Right ventricle myocardium inferior (tissue), 1 donor: ENCODE measurements at regions of chr10 and their contacts with region 1.

Region 1: DNA sequence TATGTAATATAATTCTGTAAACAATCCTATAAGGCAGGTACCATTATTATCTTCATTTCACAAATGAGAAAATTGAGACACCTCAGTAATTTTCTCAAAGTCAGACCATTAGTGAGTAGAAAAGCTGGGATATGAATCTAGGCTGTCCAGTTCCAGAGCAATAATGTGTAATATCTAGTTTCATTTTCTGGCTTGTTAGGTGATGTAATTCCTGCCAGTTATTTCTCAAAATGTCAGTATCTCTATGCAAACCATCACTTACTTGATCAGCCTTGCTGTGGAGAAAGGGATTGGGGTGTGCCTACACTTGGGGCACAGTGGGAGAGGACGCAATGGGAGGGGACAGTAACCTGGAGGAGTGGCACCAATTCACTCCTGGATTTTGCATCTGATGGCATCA is 157.5 kb downstream of the LYZL1 start:
- DNase-seq: no peak
- ATAC-seq: no peak

Region 2: GRCh38 chr10:29304264-29305030 is 141.9 kb before region 1 on chr10:
- intact Hi-C with region 1: no loop called
- DNase-seq: no peak
- ATAC-seq: peak; percentile 77

Region 3: GRCh38 chr10:29370097-29371092 is 75.9 kb before region 1 on chr10:
- intact Hi-C with region 1: no loop called
- DNase-seq: no peak
- ATAC-seq: no peak

Region 4: DNA sequence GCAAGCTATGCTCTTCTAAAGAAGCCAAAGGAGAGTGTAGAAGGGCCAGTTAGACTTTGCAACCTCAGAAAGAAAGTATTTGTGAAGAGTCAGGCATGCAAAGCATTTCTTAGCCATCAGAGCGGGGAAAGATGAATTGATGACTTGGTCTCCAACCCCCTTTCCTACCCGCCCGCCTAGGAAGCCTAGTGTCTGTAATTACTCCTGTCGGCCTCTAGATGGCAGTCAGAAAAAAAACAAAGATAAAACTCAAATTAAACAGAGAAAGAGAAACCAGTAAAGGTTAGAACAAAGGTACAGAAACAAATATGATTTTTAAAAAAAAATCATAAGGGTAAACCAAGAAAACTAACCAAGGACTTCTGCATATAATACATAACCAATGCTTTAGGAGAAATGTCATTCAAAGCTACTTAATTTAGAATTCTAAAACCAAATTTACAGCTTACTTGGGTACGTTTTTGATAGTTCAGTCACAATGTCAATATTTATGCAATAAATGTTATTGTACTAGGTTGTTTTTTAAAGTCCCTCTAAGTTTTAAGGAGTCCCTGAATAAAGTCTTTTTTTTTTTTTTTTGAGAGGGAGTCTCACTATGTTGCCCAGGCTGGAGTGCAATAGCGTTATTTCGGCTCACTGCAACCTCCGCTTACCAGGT is 59.9 kb before region 1 on chr10:
- intact Hi-C with region 1: loop called (anchors 5 kb)
- DNase-seq: no peak
- ATAC-seq: no peak

Region 5: DNA sequence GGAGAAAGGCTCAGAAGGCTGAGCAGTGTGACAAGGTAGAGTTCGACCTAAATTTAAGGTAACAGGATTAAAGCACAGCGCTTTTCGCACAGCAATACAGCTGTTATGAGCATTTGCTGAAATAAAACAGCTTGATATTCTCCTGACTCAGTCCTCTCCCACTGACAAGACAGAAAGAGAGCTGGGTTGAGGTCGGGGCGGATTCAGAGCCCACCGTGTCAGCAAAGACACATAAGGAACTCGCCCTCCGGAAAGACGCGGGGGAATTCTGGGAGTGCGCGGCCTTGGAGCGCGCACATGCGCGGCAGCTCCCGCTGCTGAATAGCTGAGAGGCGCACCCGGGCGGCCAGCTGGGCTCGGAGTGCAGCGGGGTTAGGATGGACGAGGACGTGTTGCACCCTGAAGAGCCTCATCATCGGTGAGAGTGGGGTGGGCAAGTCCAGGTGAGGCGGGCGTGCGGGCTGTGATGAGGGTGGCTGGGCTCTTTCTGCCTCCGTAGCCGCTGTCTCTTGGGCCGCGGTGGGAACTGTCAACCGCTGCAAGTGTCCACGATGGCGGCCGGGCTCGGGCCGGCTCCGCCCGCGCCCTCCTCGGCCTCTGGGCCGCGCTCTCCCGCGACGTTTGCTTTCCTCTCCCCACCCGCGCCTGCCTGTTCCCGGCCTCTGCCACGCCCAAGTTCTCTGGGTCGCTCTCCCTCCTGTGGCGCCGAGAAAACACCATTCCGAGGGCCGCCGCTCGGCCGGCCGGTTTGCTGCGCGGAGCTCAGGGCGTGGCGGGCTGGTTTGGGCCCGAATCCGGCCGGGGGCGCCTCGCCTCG is 36.9 kb before region 1 on chr10:
- intact Hi-C with region 1: loop called (anchors 5 kb)
- DNase-seq: peak; percentile 90
- ATAC-seq: peak; percentile 98